Left ventricle myocardium inferior (tissue), 1 donor: ENCODE measurements at regions of chr12 and their contacts with region 1.

Region 1: DNA sequence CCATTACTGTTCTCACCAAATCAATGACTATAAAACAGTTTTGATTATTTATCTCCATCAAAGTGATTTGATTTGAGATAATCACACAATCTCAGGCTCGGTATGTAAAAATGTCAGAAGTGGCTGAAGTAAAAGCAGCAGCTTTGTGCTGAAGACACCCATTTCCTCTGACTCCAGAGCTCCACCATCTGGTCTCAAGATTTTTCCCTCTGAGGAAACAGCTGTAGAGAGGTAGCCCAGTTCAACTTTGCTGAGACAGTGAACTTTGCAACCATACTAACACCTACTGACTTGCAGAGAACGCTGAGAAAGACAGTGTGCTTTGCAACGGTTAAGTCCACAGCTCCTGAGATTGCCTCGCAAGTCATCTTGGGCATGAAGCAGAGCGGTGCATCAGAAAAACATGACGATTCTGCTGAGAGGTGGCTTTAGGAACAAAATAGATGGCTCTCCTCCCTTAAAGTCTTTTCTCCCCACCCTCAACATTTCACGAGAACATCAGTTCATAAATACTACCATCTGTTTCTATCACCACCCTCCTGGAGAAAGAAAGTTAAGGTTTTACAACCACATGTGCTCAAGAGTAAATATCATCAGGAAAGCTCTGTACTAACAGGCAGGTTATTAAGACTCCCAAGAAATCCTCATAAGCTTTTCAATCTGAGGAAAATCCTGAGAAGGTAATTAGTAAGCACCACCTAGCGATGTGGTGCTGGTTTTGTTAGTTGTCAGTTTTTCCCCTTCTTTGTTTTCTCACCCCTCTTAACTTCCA is 34.8 kb downstream of the HIGD1C start:
- DNase-seq: no peak
- H3K4me3 ChIP-seq: no peak overlapping the region
- H3K27ac ChIP-seq: peak overlapping the region; percentile 51
- H3K4me1 ChIP-seq: peaks cover 26% of the 10 kb centered on the region
- H3K27me3 ChIP-seq: no peaks in the 10 kb centered on the region
- CTCF ChIP-seq: peak; percentile 69

Region 2: GRCh38 chr12:50825372-50825838 is 161.7 kb before region 1 on chr12:
- intact Hi-C with region 1: loop called (anchors 5 kb)
- DNase-seq: no peak
- H3K4me3 ChIP-seq: no peak overlapping the region
- H3K27ac ChIP-seq: peak overlapping the region; percentile 81
- H3K4me1 ChIP-seq: peaks cover 10% of the 10 kb centered on the region
- H3K27me3 ChIP-seq: no peaks in the 10 kb centered on the region
- CTCF ChIP-seq: peak; percentile 64

Region 3: DNA sequence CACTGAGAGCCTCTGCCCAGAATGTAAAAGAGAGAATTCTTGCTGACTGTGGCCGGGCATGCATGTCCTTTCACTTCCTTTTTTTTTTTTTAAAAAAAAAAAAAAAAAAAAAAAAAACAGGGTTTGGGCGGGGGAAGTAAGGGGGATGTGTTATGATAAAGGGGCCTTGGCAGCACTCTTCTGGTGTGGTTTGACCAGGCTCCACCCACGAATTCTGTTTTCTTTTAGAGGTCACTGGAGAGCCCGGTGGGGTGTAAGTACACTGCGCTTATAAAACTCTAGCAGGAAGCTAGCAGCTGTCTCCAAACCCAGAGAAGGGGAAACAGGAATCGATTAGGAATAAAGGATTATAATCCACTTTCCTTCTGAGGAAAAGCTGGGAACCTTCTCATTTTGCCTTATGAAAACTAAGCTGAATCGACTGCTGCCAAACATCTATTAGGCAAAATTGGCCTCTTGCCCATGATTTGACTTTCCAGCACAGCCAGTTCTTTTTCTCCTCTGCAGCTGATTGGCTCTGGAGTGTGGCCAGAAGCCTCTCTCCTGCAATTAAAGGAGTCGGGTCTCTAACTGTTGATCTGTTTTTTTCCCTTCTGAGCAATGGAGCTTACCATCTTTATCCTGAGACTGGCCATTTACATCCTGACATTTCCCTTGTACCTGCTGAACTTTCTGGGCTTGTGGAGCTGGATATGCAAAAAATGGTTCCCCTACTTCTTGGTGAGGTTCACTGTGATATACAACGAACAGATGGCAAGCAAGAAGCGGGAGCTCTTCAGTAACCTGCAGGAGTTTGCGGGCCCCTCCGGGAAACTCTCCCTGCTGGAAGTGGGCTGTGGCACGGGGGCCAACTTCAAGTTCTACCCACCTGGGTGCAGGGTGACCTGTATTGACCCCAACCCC is 62.5 kb before region 1 on chr12:
- intact Hi-C with region 1: loop called (anchors 10 kb)
- DNase-seq: peak; percentile 90
- H3K4me3 ChIP-seq: peak overlapping the region; percentile 88
- H3K27ac ChIP-seq: peak overlapping the region; percentile 94
- H3K4me1 ChIP-seq: peaks cover 74% of the 10 kb centered on the region
- H3K27me3 ChIP-seq: no peaks in the 10 kb centered on the region
- CTCF ChIP-seq: no peak